HepG2 (cell line): ENCODE measurements at regions of chr9 and their contacts with region 1.

Region 1: DNA sequence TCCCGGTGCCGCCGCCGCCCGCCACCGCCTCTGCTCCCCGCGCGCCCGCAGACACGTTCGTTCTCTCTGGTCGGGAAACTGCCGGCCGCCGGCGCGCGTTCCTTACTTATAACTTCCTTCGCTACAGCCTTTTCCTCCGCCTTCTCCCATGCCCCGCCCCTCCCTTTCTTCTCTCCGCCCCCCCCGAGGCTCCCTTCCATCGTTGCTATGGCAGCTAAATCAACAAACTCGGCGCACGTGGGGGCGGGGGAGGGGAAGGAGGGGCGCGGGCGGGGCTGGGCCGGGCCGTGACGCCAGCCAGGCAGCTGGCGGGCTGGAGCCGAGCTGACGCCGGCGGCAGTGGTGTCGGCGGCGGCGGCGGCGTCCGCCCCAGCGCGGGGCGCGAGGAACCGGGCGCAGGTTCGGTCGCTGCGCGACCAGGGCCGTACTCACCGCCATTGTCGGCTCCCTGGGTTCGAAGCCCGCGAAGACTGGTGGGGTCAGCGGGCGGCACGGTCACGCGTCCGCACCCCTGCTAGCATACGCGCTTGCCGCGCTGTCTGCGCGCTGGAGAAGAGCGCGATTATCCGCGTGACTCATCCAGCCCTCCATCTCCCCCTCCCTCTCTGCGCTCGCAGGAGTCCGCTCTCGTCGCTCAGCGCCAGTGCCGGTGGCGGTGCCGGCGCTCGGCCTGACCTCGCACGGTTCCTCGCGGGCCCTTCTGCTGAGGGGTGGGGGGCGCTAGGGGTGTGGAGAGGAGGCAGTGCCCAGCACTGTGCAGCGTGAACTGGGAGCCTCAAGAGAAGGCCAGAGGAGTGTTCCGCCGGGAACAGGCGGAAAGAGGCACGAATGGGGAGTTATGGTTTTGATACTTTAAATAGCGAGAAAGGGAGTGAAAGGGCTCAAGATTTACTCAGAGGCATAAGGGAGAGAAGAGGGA is at the start of gene KLF4:
- DNase-seq: peak; percentile 62
- ATAC-seq: peak; percentile 82
- H3K4me3 ChIP-seq: peak within 1 kb of the TSS; percentile 40 to 64 (median 49); a peak in 5 of 6 replicates
- H3K27ac ChIP-seq: no peak within 1 kb of the TSS
- H3K4me1 ChIP-seq: peaks cover 16% of the 10 kb centered on the region
- H3K27me3 ChIP-seq: peaks cover 0 to 49% of the 10 kb centered on the region in 2 experiments; a peak in 3 of 5 replicates
- CTCF ChIP-seq: no peak
- EP300 ChIP-seq: no peak
- POLR2A ChIP-seq: no peak
- RAD21 ChIP-seq: no peak
- total RNA-seq, gene KLF4: 0.20 TPM in 1 of 2 replicates, not detected in the other

Region 2: GRCh38 chr9:107425101-107426045 is 64.6 kb before region 1 on chr9:
- CTCF ChIA-PET with region 1: no interaction called
- POLR2A ChIA-PET with region 1: no interaction called
- in situ Hi-C with region 1: no loop called
- intact Hi-C with region 1: loop called (anchors 10 kb)
- DNase-seq: peak; percentile 50
- ATAC-seq: peak; percentile 87
- H3K4me3 ChIP-seq: peak overlapping the region in 1 of 3 experiments; percentile 59; a peak in 2 of 6 replicates
- H3K27ac ChIP-seq: no peak overlapping the region
- H3K4me1 ChIP-seq: peaks cover 5% of the 10 kb centered on the region; the same call in 1 of the 2 replicates
- H3K27me3 ChIP-seq: 0 out of 5 replicates have a peak, but pooled peaks cover 0 to 4% of the 10 kb centered on the region in 2 experiments
- CTCF ChIP-seq: peak; percentile 86
- EP300 ChIP-seq: no peak
- POLR2A ChIP-seq: no peak
- RAD21 ChIP-seq: no peak; the same call in 1 of the 2 replicates

Region 3: GRCh38 chr9:107504569-107505377 is 14.8 kb after region 1 on chr9:
- CTCF ChIA-PET with region 1: no interaction called
- POLR2A ChIA-PET with region 1: interaction called, 6 read pairs
- in situ Hi-C with region 1: no loop called
- intact Hi-C with region 1: loop called (anchors 2 kb)
- DNase-seq: peak; percentile 90
- ATAC-seq: peak; percentile 95
- H3K4me3 ChIP-seq: no peak overlapping the region
- H3K27ac ChIP-seq: no peak overlapping the region
- H3K4me1 ChIP-seq: peaks cover 15% of the 10 kb centered on the region
- H3K27me3 ChIP-seq: no peaks in the 10 kb centered on the region
- CTCF ChIP-seq: no peak
- EP300 ChIP-seq: peak in 1 of 2 experiments; percentile 69; a peak in 2 of 4 replicates
- POLR2A ChIP-seq: no peak
- RAD21 ChIP-seq: no peak

Region 4: DNA sequence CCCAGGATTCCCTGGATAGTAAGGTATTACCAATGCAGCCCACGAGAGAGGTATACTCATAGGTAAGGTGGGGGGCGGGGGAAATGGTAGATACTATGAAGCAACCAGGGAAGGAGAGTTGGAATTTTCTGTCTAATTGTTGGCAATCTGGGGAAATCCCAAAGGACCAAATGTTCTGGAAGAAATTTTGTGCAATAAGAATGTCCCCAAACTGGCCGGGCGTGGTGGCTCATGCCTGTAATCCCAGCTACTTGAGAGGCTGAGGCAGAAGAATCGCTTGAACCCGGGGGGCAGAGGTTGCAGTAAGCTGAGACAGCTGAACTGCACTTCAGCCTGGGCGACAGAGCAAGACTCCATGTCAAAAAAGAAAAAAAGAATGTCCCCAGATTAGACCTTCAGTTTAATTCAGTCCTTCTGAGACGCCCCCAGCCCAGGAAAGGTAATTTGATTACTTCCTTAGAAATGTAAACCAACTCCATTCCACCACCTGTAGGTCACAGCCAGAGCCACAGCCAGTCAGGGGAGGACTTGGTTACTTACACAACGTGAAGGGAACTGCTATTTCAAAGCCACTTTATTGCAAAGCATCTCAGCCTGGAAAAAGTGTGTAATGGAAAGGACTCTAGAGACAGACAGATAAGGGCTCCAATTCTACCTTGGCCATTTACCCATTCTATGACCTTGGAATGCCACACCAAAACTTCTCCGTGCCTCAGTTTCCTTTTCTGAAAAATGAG is 49.6 kb after region 1 on chr9:
- CTCF ChIA-PET with region 1: no interaction called
- POLR2A ChIA-PET with region 1: no interaction called
- in situ Hi-C with region 1: no loop called
- intact Hi-C with region 1: no loop called
- DNase-seq: no peak
- ATAC-seq: no peak
- H3K4me3 ChIP-seq: no peak overlapping the region
- H3K27ac ChIP-seq: no peak overlapping the region
- H3K4me1 ChIP-seq: no peaks in the 10 kb centered on the region
- H3K27me3 ChIP-seq: no peaks in the 10 kb centered on the region
- CTCF ChIP-seq: no peak
- EP300 ChIP-seq: no peak
- POLR2A ChIP-seq: no peak
- RAD21 ChIP-seq: no peak

Region 5: GRCh38 chr9:108813951-108814601 is 1324.1 kb after region 1 on chr9:
- CTCF ChIA-PET with region 1: no interaction called
- POLR2A ChIA-PET with region 1: no interaction called
- in situ Hi-C with region 1: loop called (anchors 25 kb)
- intact Hi-C with region 1: no loop called
- DNase-seq: peak; percentile 58
- ATAC-seq: peak; percentile 74
- H3K4me3 ChIP-seq: no peak overlapping the region
- H3K27ac ChIP-seq: no peak overlapping the region
- H3K4me1 ChIP-seq: peaks cover 62% of the 10 kb centered on the region
- H3K27me3 ChIP-seq: no peaks in the 10 kb centered on the region
- CTCF ChIP-seq: peak; percentile 68
- EP300 ChIP-seq: no peak
- POLR2A ChIP-seq: no peak
- RAD21 ChIP-seq: peak; percentile 63; the same call in 1 of the 2 replicates